Naive thymus-derived CD4-positive, alpha-beta T cell (primary cell): ENCODE measurements at regions of chr1 and their contacts with region 1.

Region 1: GRCh38 chr1:93878889-93879586 is at the start of gene DNTTIP2:
- DNase-seq: peak; percentile 73 to 89 (median 86)
- ATAC-seq: peak; percentile 90
- H3K4me3 ChIP-seq: peak within 1 kb of the TSS; percentile 83
- H3K4me3 Mint-ChIP-seq: peak within 1 kb of the TSS; percentile 92 to 99 (median 97)
- H3K27ac ChIP-seq: peak within 1 kb of the TSS; percentile 94
- H3K27ac Mint-ChIP-seq: peak within 1 kb of the TSS; percentile 96 to 99 (median 98)
- H3K4me1 ChIP-seq: peaks cover 21 to 25% of the 10 kb centered on the region in 2 donors
- H3K4me1 Mint-ChIP-seq: peaks cover 34 to 62% (median 54%) of the 10 kb centered on the region in 7 donors
- H3K27me3 ChIP-seq: no peaks in the 10 kb centered on the region
- H3K27me3 Mint-ChIP-seq: no peaks in the 10 kb centered on the region
- total RNA-seq, gene DNTTIP2: 51.8 to 84.2 (median 77.5) TPM

Region 2: DNA sequence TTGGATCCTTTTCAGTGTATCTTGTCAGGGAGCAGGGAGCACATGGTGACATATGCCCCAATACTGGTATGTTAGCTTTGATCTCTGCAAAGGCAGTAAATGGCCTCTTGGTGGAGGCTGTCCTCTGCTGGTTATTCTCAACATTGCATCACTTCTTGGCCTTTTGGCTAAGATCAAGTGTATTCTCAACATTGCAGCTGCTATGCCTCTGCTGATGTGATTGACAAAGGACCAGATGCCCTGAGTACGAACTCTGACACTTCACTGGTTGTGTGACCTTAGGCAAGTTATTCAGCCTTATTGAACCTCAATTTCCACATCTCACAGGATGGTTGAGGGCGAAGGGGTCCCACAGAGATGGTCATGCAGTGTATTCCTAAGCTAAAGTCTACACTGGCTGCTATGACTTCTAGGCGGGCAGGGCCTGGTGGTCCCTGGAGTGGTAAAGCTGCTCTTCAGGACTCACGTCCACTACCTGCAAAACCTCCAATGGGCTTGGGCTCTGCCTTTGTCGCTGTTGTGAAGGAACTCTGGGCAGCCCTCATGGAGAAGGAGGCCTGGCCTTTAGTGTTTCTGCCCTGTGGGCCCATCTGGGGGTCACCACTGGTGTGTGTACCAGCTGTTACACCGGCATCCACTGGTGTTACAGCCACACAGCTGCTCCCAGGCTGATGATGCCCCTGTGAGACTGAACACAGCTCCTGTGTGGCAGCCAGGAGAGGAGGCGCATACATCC is 64.8 kb before region 1 on chr1:
- CTCF ChIA-PET with region 1: no interaction called
- POLR2A ChIA-PET with region 1: interaction called, 4 read pairs
- intact Hi-C with region 1: loop called in 1 of 2 experiments (anchors 2 kb)
- DNase-seq: peak in 8 of 9 donors; percentile 18 to 55 (median 36)
- ATAC-seq: peak; percentile 70
- H3K4me3 ChIP-seq: no peak overlapping the region
- H3K4me3 Mint-ChIP-seq: no peak overlapping the region
- H3K27ac ChIP-seq: no peak overlapping the region
- H3K27ac Mint-ChIP-seq: no peak overlapping the region
- H3K4me1 ChIP-seq: peaks cover 0 to 11% of the 10 kb centered on the region in 2 donors
- H3K4me1 Mint-ChIP-seq: peaks cover 19 to 23% (median 21%) of the 10 kb centered on the region in 7 donors
- H3K27me3 ChIP-seq: no peaks in the 10 kb centered on the region
- H3K27me3 Mint-ChIP-seq: peaks cover 0 to 2% (median 0%) of the 10 kb centered on the region in 5 donors

Region 3: DNA sequence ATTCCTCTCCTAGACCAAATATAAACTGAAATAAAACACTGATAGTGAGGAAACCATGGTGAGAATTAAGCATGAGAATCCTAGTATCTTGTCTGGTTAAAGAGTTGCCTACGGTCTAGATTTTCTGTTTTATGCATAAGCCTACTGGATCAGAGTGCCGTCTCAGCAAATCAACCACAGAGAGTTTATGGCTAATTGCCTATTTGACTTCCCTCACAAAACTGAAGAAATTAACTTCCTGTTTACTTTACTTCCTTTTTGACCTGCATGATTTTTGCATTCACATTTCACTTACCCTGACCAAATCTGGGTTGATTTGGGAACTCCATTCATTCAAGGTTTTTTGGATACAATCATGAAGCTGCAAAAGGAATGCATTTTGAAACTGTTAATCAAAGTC is 25.2 kb after region 1 on chr1:
- CTCF ChIA-PET with region 1: interaction called, 10 read pairs
- POLR2A ChIA-PET with region 1: interaction called, 38 read pairs
- intact Hi-C with region 1: loop called (anchors 1 kb)
- DNase-seq: no peak
- ATAC-seq: no peak
- H3K4me3 ChIP-seq: no peak overlapping the region
- H3K4me3 Mint-ChIP-seq: peak overlapping the region in 1 of 10 donors; percentile 44
- H3K27ac ChIP-seq: no peak overlapping the region
- H3K27ac Mint-ChIP-seq: peak overlapping the region in 5 of 9 donors; percentile 6 to 69 (median 31)
- H3K4me1 ChIP-seq: peaks cover 9 to 24% of the 10 kb centered on the region in 2 donors
- H3K4me1 Mint-ChIP-seq: peaks cover 18 to 44% (median 36%) of the 10 kb centered on the region in 7 donors
- H3K27me3 ChIP-seq: no peaks in the 10 kb centered on the region
- H3K27me3 Mint-ChIP-seq: no peaks in the 10 kb centered on the region